Right ventricle myocardium inferior (tissue), 1 donor: ENCODE measurements at regions of chr11 and their contacts with region 1.

Region 1: DNA sequence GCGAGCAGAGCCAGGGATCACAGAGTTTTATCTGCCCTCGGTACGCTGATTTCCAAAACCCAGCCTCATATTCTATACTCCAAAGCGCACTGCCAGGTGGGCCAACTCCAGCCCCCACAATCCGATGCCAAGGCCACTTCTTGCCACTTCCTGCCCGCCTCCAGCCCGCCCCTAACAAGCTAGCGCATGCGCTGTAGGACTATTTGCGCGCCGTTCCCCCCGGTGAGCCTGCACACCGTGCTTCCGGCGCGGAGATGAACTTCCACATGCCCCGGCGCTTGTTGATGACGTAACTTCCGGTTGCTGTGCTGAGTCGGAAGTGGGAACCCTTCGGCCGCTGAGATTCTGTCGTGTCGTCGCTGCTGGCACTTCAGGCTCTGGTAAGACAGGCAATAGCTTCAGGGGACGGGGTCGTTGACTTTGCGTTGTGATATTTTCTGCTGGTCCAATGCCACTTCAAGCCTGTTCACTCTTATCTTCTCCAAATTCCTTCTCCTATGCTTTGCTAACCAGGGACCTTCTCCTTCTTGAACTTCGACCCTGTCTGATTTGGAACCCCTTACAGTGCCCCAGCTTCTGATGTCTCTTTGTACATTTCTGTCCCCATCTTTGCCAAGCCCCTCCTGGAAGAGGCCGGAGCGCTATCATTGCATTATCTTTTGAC is at the start of gene UBE4A:
- DNase-seq: peak; percentile 98
- ATAC-seq: peak; percentile 96
- total RNA-seq, gene UBE4A: 32.0 TPM

Region 2: DNA sequence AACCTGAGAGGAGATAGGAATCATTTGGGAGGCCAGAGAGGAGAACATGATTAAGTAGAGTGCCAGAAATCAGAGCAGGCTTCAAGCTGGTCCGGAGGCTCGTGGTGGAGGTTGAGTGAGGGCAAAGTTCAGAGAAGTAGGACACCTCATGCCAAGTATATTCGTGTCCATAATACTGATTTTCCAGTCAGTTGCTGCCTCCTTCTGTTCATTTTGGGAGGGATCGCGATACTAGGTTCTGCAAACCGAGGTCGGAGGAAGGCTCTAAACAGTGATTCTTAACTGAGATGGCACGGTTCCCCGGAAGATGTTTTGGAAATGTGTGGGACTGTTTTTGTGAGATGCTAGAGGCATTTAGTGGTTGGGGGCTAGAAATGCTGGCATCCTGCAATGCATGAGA is 68.5 kb before region 1 on chr11:
- intact Hi-C with region 1: loop called (anchors 10 kb)
- DNase-seq: no peak
- ATAC-seq: peak; percentile 75

Region 3: DNA sequence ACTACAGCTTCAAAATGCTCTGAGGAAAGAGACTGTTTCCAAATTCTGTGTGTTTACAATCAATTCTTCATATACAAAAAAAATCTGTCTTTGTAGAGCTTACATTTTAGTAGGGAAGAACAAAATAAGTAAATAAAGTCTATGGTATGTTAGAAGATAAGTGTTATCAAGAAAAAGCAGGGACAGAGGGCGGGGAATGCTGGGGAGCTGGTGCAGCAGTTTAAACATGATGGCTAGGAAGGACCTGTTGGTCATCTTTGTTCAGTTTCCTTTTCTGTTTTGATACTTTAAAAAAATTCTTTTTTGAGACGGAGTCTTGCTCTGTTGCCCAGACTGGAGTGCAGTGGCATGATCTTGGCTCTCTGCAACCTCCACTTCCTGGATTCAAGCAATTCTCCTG is 187.7 kb after region 1 on chr11:
- intact Hi-C with region 1: no loop called
- DNase-seq: no peak
- ATAC-seq: no peak

Region 4: GRCh38 chr11:119149018-119149785 is 789.8 kb after region 1 on chr11 and contains the start of gene ABCG4:
- intact Hi-C with region 1: no loop called
- DNase-seq: no peak
- ATAC-seq: peak; percentile 22
- total RNA-seq, gene ABCG4: 1.3 TPM